Activated naive CD4-positive, alpha-beta T cell treated with anti-CD3 and anti-CD28 coated beads, Interleukin-2, amount 10 ng/mL, durations not matched to agents 7 days and 5 days (primary cell): ENCODE measurements at regions of chr5 and their contacts with region 1.

Region 1: DNA sequence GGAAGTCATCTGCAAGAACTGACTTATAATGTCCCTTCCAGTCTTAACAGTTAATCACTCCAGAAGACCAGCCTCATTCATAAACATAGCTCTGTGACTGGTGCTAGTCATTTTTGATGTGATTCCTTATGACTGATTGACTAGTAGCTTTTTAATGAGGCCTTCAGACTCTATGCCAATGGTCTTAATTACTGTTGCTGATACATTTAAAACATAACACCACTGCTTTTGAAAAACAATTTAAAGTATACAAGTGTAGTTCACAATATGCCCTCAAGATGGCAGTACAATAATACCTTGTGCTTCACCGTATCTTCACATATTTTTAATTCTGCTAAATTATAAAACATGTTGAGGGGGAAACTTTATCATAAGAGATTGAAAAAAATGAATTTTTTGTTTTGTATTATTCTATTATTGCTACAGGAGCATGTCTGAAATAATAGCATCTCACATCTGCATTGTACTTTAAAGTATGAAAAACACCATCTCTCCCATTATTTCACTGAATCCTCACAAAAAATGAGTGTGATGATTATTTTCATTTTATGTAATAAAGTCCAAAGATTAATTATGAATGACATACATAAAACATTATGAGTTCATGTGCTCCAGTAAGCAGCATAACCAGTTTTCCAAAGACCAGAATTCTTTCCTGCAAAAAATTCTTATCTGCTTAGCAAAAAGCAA is 55.2 kb upstream of the SHISAL2B start:
- DNase-seq: no peak
- H3K4me3 Mint-ChIP-seq: no peak overlapping the region
- H3K27ac Mint-ChIP-seq: no peak overlapping the region
- H3K4me1 Mint-ChIP-seq: peaks cover 4% of the 10 kb centered on the region
- H3K27me3 Mint-ChIP-seq: peaks cover 19% of the 10 kb centered on the region

Region 2: GRCh38 chr5:64384761-64385160 is 250.4 kb before region 1 on chr5:
- CTCF ChIA-PET with region 1: no interaction called
- DNase-seq: no peak
- H3K4me3 Mint-ChIP-seq: no peak overlapping the region
- H3K27ac Mint-ChIP-seq: no peak overlapping the region
- H3K4me1 Mint-ChIP-seq: no peaks in the 10 kb centered on the region
- H3K27me3 Mint-ChIP-seq: no peaks in the 10 kb centered on the region

Region 3: DNA sequence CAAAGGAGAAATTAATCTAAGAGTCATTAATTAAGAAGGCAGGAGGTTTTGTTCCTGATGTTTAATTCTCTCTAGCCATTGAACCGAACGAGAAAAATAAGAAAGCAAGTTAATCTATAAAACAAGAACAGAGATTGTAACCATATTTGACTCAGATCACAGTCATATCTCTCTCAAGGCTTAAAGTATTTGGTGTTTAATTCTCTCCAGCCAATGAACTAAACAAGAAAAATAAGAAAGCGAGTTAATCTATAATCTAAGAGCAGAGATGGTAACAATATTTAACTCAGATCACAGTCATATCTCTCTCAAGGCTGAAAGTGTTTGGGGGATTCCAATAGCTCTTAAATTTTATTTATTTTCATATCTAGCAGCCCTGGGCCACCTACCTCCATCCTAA is 19.2 kb before region 1 on chr5:
- CTCF ChIA-PET with region 1: no interaction called
- DNase-seq: no peak
- H3K4me3 Mint-ChIP-seq: no peak overlapping the region
- H3K27ac Mint-ChIP-seq: no peak overlapping the region
- H3K4me1 Mint-ChIP-seq: no peaks in the 10 kb centered on the region
- H3K27me3 Mint-ChIP-seq: peaks cover 8% of the 10 kb centered on the region

Region 4: GRCh38 chr5:64784451-64785025 is 149.4 kb after region 1 on chr5:
- CTCF ChIA-PET with region 1: interaction called, 42 read pairs
- DNase-seq: peak; percentile 85
- H3K4me3 Mint-ChIP-seq: no peak overlapping the region
- H3K27ac Mint-ChIP-seq: no peak overlapping the region
- H3K4me1 Mint-ChIP-seq: no peaks in the 10 kb centered on the region
- H3K27me3 Mint-ChIP-seq: no peaks in the 10 kb centered on the region